WTC11 (cell line): ENCODE measurements at regions of chr4 and their contacts with region 1.

Region 1: DNA sequence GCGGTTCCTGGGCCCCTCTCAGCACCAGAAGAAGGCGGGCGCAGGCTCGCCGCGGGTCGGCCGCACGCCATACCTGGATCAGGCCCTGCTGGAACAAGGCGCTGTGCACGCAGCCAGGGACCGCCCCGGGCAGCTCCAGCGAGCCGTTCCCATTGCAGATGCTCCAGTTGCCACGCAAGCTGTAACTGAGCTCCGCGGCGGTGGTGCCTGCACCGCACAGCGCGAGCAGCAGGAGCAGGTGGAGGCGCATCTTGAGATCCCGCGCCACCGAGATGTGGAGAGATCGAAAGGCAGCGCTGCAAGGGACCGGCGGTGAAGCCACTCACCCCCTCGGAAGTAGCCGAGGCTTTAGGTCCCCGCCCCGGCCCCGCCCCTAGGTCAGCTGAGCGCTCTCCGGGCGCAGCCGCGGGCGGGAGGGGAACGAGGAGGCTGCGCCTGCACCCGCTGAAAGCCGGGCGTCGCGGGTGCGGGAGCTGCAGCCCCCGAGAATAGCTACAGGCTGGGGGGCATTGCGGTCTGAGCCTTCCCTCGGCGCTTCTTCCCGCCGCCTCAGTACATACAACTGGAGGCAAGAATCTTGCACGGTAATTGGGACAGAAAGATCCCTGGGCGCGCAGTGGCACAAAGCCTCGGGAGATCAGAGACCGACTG is at the start of gene MANBA:
- DNase-seq: peak; percentile 85
- ATAC-seq: peak; percentile 90
- H3K4me3 Mint-ChIP-seq: peak within 1 kb of the TSS; percentile 97
- H3K27ac Mint-ChIP-seq: peak within 1 kb of the TSS; percentile 86
- H3K4me1 Mint-ChIP-seq: peaks cover 33% of the 10 kb centered on the region
- H3K27me3 Mint-ChIP-seq: no peaks in the 10 kb centered on the region; the same call in 1 of the 2 replicates
- CTCF ChIP-seq: no peak
- total RNA-seq, gene MANBA: 35.1 to 37.6 TPM (median 37.5 TPM) in 3 replicates

Region 2: DNA sequence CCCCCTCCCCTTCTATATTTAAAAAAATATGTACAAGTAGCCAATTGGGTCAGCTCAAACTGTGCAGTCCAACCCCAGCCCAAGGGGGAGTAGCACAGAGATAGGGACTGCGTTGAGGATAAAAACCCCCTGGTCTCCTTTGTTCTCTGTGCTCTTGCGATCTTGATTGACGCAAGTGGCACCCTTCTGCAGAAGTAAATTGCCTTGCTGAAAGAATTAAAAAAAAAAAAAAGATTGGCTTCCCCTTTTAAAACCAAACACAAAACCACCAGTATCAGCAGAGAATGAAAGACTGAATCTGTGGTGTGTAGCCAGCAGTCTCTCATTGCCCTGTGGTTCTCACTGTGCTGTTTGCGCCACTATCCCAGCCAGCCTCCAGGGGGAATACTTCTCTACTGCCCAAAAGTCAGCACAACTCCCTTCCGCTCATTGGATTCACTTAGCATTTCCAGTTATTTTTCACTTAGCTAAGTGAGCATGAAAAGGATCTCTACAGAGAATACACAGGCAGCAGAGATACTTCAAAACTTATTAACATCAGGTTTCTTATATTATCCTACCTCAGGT is 29.7 kb before region 1 on chr4:
- CTCF ChIA-PET with region 1: interaction called, 13 read pairs
- POLR2A ChIA-PET with region 1: interaction called, 7 read pairs
- DNase-seq: peak; percentile 51
- ATAC-seq: peak; percentile 99
- H3K4me3 Mint-ChIP-seq: no peak overlapping the region
- H3K27ac Mint-ChIP-seq: no peak overlapping the region
- H3K4me1 Mint-ChIP-seq: no peaks in the 10 kb centered on the region; the same call in none of the 2 replicates
- H3K27me3 Mint-ChIP-seq: no peaks in the 10 kb centered on the region; the same call in 1 of the 2 replicates
- CTCF ChIP-seq: no peak; the same call in 1 of the 2 replicates

Region 3: GRCh38 chr4:102868781-102869568 is 108.2 kb after region 1 on chr4 and contains the start of gene CISD2:
- CTCF ChIA-PET with region 1: no interaction called
- POLR2A ChIA-PET with region 1: interaction called, 18 read pairs
- DNase-seq: peak; percentile 93
- ATAC-seq: peak; percentile 91
- H3K4me3 Mint-ChIP-seq: peak within 1 kb of the TSS; percentile 81
- H3K27ac Mint-ChIP-seq: peak within 1 kb of the TSS; percentile 100
- H3K4me1 Mint-ChIP-seq: peaks cover 44% of the 10 kb centered on the region
- H3K27me3 Mint-ChIP-seq: no peaks in the 10 kb centered on the region
- CTCF ChIP-seq: no peak
- total RNA-seq, gene CISD2: 30.0 to 36.6 TPM (median 36.2 TPM) in 3 replicates